ENCODE measurements at regions of chr16 and their contacts with region 1.

Region 1: DNA sequence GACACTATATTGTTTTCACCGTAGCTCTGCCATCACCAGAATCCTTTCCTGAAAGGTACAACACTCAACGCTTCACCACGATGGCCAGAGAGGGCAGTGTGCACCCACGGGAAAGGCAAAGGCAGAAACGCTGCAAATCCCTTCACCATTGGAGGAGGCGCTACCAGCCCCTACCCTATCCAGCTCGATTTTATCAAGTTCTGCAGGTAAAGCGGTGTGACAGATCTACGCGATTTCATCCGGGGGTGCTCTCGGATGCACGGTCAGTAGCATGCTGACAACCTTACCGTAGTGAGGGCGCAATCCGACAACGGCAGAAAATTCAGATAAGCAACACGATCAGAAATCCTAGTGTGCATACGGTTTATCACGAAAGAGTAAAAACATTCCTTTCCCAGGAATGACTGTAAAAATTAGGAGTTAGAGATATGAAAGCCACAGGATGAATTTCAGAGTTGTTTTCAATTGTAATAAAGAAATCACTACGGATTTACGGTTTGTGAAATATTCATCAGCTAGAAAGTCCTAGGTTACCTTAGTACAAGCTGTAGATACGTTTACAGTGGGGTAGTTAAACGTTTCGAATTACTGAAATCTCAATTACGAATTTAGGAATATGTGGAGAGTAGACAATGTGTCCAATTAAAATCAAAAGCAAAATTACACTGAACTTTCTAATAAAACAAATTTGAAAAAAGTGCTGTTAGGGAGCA is 1.8 kb downstream of the NETO2 start:
- DNase-seq: peak; percentile 71 to 86 (median 71)
- H3K4me3 ChIP-seq: peak overlapping the region; percentile 42
- H3K4me3 Mint-ChIP-seq: peak overlapping the region; percentile 87 to 91 (median 89)
- H3K27ac ChIP-seq: no peak overlapping the region
- H3K27ac Mint-ChIP-seq: peak overlapping the region in 7 of 8 donors; percentile 2 to 76 (median 53)
- H3K4me1 ChIP-seq: peaks cover 16% of the 10 kb centered on the region
- H3K4me1 Mint-ChIP-seq: peaks cover 16 to 19% (median 17%) of the 10 kb centered on the region in 3 donors
- H3K27me3 ChIP-seq: no peaks in the 10 kb centered on the region
- H3K27me3 Mint-ChIP-seq: peaks cover 12 to 16% of the 10 kb centered on the region in 2 donors

Region 2: DNA sequence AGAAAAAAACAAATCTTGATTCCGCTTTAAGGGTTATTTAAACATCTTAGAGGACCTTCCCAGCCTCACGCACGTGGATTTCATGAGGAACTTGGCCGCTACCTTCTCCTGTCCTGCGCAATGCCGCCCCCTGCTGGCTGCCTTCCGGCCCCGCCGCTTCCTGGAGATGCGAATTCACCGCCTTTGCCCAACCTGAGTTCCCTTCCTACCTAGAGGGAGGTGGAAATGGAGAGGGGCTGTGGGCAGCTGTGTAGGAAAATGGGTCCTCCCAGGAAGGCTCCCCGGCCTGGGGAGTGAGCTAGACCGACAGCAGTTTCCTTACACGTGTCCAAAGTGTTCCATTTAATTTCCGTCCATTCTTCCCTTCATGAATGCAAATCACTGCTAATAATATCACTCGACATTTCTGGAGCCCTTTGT is 1014.9 kb after region 1 on chr16:
- CTCF ChIA-PET with region 1: interaction called, 23 read pairs
- POLR2A ChIA-PET with region 1: no interaction called
- DNase-seq: peak; percentile 57 to 78 (median 70)
- H3K4me3 ChIP-seq: no peak overlapping the region
- H3K4me3 Mint-ChIP-seq: no peak overlapping the region
- H3K27ac ChIP-seq: no peak overlapping the region
- H3K27ac Mint-ChIP-seq: no peak overlapping the region
- H3K4me1 ChIP-seq: no peaks in the 10 kb centered on the region
- H3K4me1 Mint-ChIP-seq: peaks cover 0 to 6% (median 2%) of the 10 kb centered on the region in 3 donors
- H3K27me3 ChIP-seq: no peaks in the 10 kb centered on the region
- H3K27me3 Mint-ChIP-seq: peaks cover 11 to 29% of the 10 kb centered on the region in 2 donors

Region 3: DNA sequence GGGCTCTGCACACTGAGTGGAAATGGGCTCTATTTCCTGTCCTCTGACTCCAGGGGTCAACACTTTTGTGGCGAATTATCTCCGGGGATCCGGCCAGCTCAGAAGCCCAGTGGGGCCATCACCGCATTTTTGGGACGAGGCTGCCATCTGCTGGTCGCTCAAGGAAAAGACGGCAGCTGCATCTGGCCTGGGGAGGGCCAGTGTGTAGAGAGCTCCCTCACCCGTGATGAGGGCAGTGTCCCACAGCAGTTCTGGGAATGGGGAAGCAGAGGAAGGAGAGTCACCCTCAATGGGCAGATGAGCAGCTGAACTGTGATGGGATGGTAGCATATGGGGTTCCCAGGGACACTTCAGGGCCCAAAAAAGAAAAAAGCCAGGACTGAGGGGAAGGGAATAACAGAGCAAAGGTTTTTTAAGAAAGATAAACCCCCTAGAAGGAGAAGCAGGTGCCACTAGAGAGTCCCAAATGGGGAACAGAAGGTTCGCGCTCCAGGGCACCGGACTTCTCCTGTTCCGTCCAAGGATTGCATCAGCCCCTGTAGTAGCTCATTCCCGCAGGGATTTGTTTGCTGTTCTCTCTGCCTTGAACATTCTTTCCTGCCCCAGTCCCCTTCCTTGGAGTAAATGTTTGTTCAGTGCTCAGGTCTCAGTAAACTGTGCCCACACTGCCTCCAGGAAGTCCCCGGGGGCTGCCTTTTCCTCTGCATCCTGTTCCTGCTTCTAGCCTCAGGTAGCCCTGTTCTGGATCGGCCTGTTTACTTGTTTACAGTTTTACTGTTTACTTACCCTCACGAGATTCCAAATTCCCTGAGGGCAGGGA is 1023.2 kb after region 1 on chr16:
- CTCF ChIA-PET with region 1: interaction called, 14 read pairs
- POLR2A ChIA-PET with region 1: no interaction called
- DNase-seq: peak; percentile 34 to 65 (median 45)
- H3K4me3 ChIP-seq: no peak overlapping the region
- H3K4me3 Mint-ChIP-seq: no peak overlapping the region
- H3K27ac ChIP-seq: no peak overlapping the region
- H3K27ac Mint-ChIP-seq: peak overlapping the region in 1 of 8 donors; percentile 5
- H3K4me1 ChIP-seq: no peaks in the 10 kb centered on the region
- H3K4me1 Mint-ChIP-seq: peaks cover 0 to 5% (median 3%) of the 10 kb centered on the region in 3 donors
- H3K27me3 ChIP-seq: no peaks in the 10 kb centered on the region
- H3K27me3 Mint-ChIP-seq: peaks cover 0 to 4% of the 10 kb centered on the region in 2 donors